Activated T-helper 2 cell treated with anti-CD3 and anti-CD28 coated beads, Interferon-gamma antibody, Interleukin-2, Interleukin-4, amounts not matched to agents 10 μg/mL and 5 μg/mL and 100 μg/mL, durations not matched to agents 14 hours and 24 hours and 36 hours (primary cell): ENCODE measurements at regions of chr22 and their contacts with region 1.

Region 1: GRCh38 chr22:30634471-30635233 is 929 bp upstream of the SLC35E4 start:
- DNase-seq: peak; percentile 81
- H3K4me3 Mint-ChIP-seq: peak overlapping the region; percentile 75
- H3K27ac Mint-ChIP-seq: peak overlapping the region; percentile 93
- H3K4me1 Mint-ChIP-seq: peaks cover 23% of the 10 kb centered on the region
- H3K27me3 Mint-ChIP-seq: no peaks in the 10 kb centered on the region

Region 2: GRCh38 chr22:30649430-30650007 is 14.9 kb after region 1 on chr22:
- intact Hi-C with region 1: loop called (anchors 1 kb)
- DNase-seq: peak; percentile 65
- H3K4me3 Mint-ChIP-seq: no peak overlapping the region
- H3K27ac Mint-ChIP-seq: peak overlapping the region; percentile 83
- H3K4me1 Mint-ChIP-seq: peaks cover 39% of the 10 kb centered on the region
- H3K27me3 Mint-ChIP-seq: no peaks in the 10 kb centered on the region

Region 3: DNA sequence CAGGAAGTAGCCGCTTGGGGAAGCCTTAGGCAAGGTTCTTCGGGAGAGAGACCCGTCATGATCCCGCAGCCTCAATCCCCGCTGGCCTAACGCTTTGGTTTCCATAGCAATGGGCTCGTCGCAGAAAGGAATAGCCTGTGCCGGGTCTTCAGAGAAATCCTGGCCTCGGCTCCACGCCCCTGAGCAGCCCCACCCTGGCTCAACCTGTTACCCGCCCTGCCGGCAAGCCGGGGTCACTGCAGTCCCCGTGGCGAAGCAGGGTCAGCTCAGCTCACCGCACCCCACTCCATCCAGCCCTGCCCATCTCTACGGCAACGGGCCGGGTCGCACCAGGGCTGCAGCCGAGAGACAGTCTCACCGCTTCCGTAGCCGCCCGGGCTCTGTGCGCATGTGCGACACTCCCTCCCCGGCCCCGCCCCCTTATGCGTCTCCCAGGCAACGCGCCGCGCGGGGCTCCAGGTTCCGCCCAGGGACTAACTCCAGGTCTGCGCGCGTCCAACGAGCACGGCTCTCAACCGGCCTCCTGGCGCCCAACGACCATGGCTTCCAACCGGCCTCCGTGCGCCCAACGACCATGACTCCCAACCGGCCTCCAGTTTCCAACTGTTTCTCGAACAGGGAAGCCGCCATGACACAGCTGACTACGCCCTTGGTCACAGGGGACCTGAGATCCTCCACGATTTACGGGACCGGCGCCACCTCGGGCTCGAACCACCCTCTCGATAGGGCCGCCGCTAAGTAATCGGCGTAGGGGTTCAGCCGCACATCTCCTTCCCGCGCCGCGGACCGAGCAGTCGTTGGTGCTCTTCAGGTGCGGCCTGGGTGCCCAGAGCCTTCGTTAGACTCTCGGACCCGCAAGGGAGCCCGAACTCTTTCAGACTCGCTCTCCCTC is 33.1 kb after region 1 on chr22 and contains the start of gene DUSP18:
- intact Hi-C with region 1: loop called (anchors 1 kb)
- DNase-seq: peak; percentile 91
- H3K4me3 Mint-ChIP-seq: peak within 1 kb of the TSS; percentile 87
- H3K27ac Mint-ChIP-seq: peak within 1 kb of the TSS; percentile 72
- H3K4me1 Mint-ChIP-seq: peaks cover 16% of the 10 kb centered on the region
- H3K27me3 Mint-ChIP-seq: peaks cover 7% of the 10 kb centered on the region
- total RNA-seq, gene DUSP18: 10.5 and 11.2 TPM in 2 replicates

Region 4: DNA sequence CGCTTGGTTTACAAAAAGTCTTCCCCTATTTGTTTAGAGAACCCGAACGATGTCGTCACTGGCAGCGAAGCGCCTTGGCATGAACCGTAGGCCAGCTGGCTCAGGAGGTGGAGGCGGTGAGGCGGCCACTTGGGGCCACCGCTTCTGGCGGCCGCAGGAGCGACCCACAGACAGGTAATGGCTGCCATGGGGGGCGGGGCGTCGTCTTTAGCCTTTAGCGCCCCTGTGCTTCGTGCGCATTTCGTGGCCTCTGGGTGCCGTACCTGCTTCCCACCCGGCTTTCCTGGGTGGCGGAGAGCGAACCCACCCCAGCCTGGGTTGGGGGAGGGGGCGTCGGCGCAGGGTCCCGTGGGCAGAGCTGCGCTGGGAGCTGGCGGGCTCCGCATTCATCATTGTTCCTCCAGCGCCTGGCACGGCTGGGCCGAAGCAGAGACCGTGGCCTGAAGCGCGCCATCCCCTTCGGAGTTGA is 59.6 kb after region 1 on chr22:
- intact Hi-C with region 1: loop called (anchors 1 kb)
- DNase-seq: peak; percentile 40
- H3K4me3 Mint-ChIP-seq: peak overlapping the region; percentile 85
- H3K27ac Mint-ChIP-seq: peak overlapping the region; percentile 74
- H3K4me1 Mint-ChIP-seq: peaks cover 8% of the 10 kb centered on the region
- H3K27me3 Mint-ChIP-seq: peaks cover 16% of the 10 kb centered on the region

Region 5: DNA sequence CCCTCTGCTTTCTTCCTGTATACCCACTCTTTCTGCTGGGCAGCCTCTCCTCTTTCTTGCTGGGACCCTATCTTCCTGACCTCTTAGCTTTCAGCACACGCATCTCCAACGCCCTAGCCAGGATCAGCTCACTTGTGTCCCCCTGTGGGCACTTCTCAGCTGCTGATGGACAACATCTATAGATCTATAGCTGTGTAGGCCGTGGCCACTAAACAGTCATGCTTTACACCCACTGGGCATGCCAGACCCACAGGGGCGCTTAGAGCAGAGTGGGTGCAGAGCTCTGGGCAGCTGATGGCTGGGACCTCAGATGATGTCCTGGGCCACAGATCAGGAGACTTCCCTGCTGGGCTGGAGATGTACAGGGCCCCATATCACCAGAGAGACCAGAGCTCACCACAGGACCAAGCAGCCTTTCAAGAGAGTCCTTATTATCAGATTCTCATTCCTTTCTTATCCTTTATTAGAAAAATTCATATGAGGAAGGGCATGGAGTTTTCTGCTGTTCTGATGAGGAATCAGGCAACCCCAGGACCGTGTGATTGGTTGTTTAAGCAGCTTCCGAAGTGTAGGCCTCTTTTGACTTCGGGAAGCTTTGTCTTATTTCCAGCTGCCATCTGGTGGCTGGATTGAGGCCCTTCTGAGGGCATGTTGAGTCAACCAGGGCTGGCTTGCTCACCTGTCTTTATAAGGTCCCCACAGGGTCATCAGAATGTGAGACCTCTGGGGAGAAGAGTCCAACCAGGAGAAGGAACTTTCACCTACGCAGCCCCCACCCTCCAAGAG is 120.5 kb after region 1 on chr22:
- intact Hi-C with region 1: loop called (anchors 1 kb)
- DNase-seq: peak; percentile 37
- H3K4me3 Mint-ChIP-seq: no peak overlapping the region
- H3K27ac Mint-ChIP-seq: no peak overlapping the region
- H3K4me1 Mint-ChIP-seq: peaks cover 5% of the 10 kb centered on the region
- H3K27me3 Mint-ChIP-seq: peaks cover under 1% of the 10 kb centered on the region

Region 6: DNA sequence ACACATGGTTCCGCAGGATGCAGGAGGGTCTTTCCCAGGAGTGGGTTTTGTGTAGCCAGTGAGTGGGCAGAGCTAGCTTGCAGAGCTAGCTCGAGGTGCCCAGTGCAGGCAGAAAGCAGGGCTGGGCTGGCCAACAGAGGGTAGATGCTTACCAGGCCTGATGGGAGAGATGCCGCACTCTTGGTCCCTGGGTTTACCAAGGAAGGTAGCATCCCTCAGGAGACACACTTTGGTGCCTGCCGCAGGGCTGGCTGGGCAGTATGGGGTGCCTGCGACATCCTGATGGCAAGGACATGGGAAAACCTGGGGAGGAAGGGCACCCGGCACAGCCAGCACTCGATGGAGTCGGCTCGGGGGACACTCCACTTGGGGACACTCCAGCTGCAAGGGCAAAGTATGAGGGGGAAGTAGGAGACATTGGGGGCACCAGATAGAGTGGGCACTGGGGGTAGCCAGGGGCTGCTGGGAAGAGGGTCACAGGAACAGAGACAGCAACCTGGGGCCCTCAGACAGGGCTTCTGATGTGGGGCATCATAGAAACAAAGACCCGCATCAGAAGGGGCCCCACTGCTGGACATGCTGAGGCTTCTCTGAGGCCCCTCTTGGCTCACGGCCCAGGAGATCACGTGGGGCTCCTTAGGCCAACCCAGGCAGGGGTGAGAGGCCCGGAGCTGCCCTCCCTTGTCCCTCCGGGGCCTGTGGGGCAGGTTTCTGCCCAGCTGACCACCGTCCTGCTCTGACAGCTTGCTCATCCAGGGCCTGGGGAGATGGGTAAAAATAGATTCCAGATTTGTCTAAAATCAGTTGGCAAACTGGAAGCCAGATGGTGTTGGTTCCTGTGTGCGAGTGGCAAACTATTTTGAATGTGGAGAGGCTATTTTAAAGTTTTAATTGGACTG is 244.1 kb after region 1 on chr22:
- intact Hi-C with region 1: no loop called
- DNase-seq: no peak
- H3K4me3 Mint-ChIP-seq: no peak overlapping the region
- H3K27ac Mint-ChIP-seq: no peak overlapping the region
- H3K4me1 Mint-ChIP-seq: no peaks in the 10 kb centered on the region
- H3K27me3 Mint-ChIP-seq: no peaks in the 10 kb centered on the region

Region 7: DNA sequence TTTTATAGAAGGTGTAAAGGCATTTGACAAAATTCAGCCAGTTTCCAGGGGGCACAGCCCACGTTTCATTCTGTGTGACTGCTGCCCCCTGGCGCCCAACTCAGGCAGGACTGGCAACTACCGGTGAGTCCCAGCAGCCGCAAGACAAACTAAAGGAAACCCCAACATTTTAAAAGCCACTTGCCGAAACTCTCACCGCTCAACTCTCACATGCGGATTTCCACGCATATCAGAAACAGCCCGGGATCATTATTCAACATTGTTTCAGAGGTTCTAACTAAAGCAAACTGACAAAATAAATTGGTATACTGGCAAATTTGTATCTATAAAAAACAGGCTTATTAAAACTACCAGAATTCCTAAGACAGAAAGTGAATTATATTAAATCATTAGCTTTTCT is 285.8 kb after region 1 on chr22:
- intact Hi-C with region 1: loop called (anchors 2 kb)
- DNase-seq: peak; percentile 74
- H3K4me3 Mint-ChIP-seq: peak overlapping the region; percentile 82
- H3K27ac Mint-ChIP-seq: no peak overlapping the region
- H3K4me1 Mint-ChIP-seq: peaks cover 15% of the 10 kb centered on the region
- H3K27me3 Mint-ChIP-seq: no peaks in the 10 kb centered on the region